Activated T-helper 2 cell treated with anti-CD3 and anti-CD28 coated beads, Interferon-gamma antibody, Interleukin-2, Interleukin-4, amounts not matched to agents 10 μg/mL and 5 μg/mL and 100 μg/mL, durations not matched to agents 14 hours and 24 hours and 36 hours (primary cell): ENCODE measurements at regions of chr3 and their contacts with region 1.

Region 1: GRCh38 chr3:122014741-122015140 is 7.3 kb downstream of the ILDR1 start:
- DNase-seq: no peak
- H3K4me3 Mint-ChIP-seq: no peak overlapping the region
- H3K27ac Mint-ChIP-seq: no peak overlapping the region
- H3K4me1 Mint-ChIP-seq: peaks cover 37% of the 10 kb centered on the region
- H3K27me3 Mint-ChIP-seq: peaks cover 2% of the 10 kb centered on the region

Region 2: GRCh38 chr3:121557426-121557934 is 457.3 kb before region 1 on chr3:
- intact Hi-C with region 1: no loop called
- DNase-seq: no peak
- H3K4me3 Mint-ChIP-seq: no peak overlapping the region
- H3K27ac Mint-ChIP-seq: no peak overlapping the region
- H3K4me1 Mint-ChIP-seq: peaks cover 1% of the 10 kb centered on the region
- H3K27me3 Mint-ChIP-seq: peaks cover 6% of the 10 kb centered on the region

Region 3: DNA sequence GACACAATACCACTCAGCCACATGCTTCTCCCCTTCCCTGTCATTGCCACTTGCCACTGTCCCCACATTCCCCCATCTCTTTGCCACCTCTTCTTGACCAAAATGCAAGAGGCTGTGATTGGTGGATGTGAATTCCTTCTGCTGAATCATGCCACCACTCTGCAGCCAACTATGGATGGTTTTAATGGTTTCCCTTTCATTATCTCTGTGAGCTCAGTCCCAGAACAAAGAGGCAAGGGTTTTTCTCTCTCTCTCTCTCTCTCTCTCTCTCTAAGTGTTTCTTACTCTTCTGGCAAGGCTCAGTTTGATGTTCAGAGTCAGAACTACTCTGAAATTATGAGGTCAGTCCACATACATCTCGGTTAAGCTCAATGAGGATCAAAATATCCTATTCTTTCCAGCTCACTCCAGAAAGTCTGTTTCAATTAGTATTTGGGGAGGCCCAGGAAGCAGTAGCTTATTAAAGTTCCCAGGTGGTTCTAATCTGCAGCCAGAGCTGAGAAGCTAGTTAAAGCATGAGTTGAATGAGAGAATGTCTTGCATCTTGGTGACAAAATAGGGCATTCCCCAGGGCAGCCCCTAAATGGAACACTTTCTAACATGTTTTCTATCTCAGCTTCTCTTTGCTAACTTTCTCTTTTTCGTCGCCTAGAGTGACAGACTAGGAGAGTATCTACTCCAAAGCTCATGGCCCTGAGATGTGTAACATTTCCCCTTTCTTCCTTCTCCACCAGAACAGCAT is 15.8 kb after region 1 on chr3:
- intact Hi-C with region 1: loop called (anchors 2 kb)
- DNase-seq: peak; percentile 19
- H3K4me3 Mint-ChIP-seq: peak overlapping the region; percentile 10
- H3K27ac Mint-ChIP-seq: peak overlapping the region; percentile 86
- H3K4me1 Mint-ChIP-seq: peaks cover 23% of the 10 kb centered on the region
- H3K27me3 Mint-ChIP-seq: no peaks in the 10 kb centered on the region

Region 4: GRCh38 chr3:122146466-122146865 is 131.7 kb after region 1 on chr3:
- intact Hi-C with region 1: loop called (anchors 5 kb)
- DNase-seq: peak; percentile 56
- H3K4me3 Mint-ChIP-seq: no peak overlapping the region
- H3K27ac Mint-ChIP-seq: peak overlapping the region; percentile 46
- H3K4me1 Mint-ChIP-seq: peaks cover 31% of the 10 kb centered on the region
- H3K27me3 Mint-ChIP-seq: no peaks in the 10 kb centered on the region

Region 5: GRCh38 chr3:122572940-122573412 is 558.2 kb after region 1 on chr3:
- intact Hi-C with region 1: no loop called
- DNase-seq: no peak
- H3K4me3 Mint-ChIP-seq: no peak overlapping the region
- H3K27ac Mint-ChIP-seq: peak overlapping the region; percentile 71
- H3K4me1 Mint-ChIP-seq: peaks cover 55% of the 10 kb centered on the region
- H3K27me3 Mint-ChIP-seq: no peaks in the 10 kb centered on the region